CD8-positive, alpha-beta T cell (primary cell): ENCODE measurements at regions of chr15 and their contacts with region 1.

Region 1: DNA sequence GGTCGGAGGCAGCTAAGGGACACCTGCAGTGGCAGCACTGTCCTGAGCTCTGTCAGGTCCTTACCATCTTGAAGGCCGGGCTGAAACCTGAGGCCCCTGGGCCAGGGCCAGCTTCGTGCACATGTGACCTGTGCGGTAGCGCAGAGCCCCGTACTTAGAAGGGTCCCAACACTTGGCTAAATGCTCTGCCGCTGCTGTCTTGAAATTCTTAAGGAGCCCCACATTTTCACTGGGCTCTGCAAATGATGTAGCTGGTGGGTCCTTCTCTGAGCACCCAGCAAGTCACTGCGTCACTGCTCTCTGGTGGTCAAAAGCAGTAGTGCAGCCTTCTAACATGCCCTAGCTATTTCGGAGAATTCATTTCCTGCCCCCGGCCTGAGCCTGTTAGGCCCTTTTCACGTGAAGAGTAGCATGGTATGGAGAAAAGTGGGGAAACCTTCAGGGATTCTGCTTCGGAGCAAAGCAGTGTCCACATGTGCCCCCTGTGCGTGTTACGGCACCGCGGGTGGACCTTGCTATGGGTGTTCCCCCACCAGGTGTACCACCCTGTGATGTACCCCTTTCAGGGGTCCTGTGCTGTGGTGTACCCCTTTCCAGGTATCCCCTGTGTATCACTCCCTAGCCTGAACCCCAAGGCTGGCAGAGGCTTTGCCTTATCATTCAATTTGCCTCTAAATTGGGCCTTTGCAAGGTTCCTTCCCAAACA is 79.7 kb downstream of the TMEM266 start:
- DNase-seq: peak; percentile 50 to 75 (median 68)
- ATAC-seq: peak; percentile 95
- H3K4me3 ChIP-seq: no peak overlapping the region
- H3K4me3 Mint-ChIP-seq: no peak overlapping the region
- H3K27ac ChIP-seq: no peak overlapping the region
- H3K27ac Mint-ChIP-seq: no peak overlapping the region
- H3K4me1 ChIP-seq: peaks cover 5% of the 10 kb centered on the region
- H3K4me1 Mint-ChIP-seq: peaks cover 1% of the 10 kb centered on the region
- H3K27me3 ChIP-seq: no peaks in the 10 kb centered on the region
- H3K27me3 Mint-ChIP-seq: peaks cover 27% of the 10 kb centered on the region
- CTCF ChIP-seq: peak; percentile 80

Region 2: DNA sequence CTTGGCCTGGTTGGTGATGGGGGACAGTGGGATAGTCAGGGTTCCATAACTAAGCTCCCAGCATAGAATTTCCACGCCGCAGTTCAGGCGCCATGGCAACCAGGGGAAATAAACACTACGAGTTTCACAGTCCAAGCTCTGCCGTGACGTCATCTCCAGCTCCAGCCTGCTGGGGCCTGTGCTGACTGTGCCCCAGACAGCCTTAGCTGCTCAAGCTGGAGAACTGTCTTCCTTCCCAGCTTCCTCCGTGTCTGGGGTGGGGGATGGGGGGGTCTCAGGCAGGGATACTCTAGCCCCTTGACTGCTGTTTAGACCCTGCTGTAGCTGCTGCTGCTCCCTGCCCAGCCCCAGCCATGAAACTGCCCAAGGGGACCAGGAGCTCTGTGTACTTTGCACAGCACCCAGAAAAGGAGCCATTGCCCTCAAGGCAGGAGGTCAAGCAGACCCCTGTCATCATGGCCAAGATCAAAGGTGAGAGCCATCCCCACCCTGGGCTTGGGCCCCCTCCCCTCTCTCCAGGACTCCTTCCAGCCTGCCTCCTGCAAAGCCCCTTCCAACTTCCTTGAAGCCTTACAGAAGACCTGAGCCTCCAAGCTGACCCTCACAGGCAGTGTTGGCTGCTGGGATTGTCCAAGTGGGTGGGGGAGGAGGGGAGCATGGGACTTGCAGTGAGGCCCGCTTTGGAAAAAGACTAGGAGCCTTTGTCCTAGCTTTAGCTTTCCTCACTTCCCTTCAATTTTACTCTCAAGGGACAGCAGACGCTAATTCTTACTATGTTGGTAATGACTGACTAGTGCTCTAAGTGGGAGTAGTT is 415.5 kb before region 1 on chr15:
- CTCF ChIA-PET with region 1: interaction called, 10 read pairs
- POLR2A ChIA-PET with region 1: no interaction called
- intact Hi-C with region 1: loop called in 1 of 2 experiments (anchors 1 kb)
- DNase-seq: peak in 5 of 9 experiments; percentile 15 to 57 (median 23)
- ATAC-seq: no peak
- H3K4me3 ChIP-seq: no peak overlapping the region
- H3K4me3 Mint-ChIP-seq: no peak overlapping the region
- H3K27ac ChIP-seq: no peak overlapping the region
- H3K27ac Mint-ChIP-seq: no peak overlapping the region
- H3K4me1 ChIP-seq: no peaks in the 10 kb centered on the region
- H3K4me1 Mint-ChIP-seq: no peaks in the 10 kb centered on the region
- H3K27me3 ChIP-seq: no peaks in the 10 kb centered on the region
- H3K27me3 Mint-ChIP-seq: peaks cover 16% of the 10 kb centered on the region
- CTCF ChIP-seq: no peak

Region 3: GRCh38 chr15:75809986-75810750 is 329.4 kb before region 1 on chr15:
- CTCF ChIA-PET with region 1: interaction called, 17 read pairs
- POLR2A ChIA-PET with region 1: no interaction called
- intact Hi-C with region 1: no loop called
- DNase-seq: peak in 2 of 9 experiments; percentile 33 to 41
- ATAC-seq: no peak
- H3K4me3 ChIP-seq: no peak overlapping the region
- H3K4me3 Mint-ChIP-seq: no peak overlapping the region
- H3K27ac ChIP-seq: no peak overlapping the region
- H3K27ac Mint-ChIP-seq: no peak overlapping the region
- H3K4me1 ChIP-seq: no peaks in the 10 kb centered on the region
- H3K4me1 Mint-ChIP-seq: no peaks in the 10 kb centered on the region
- H3K27me3 ChIP-seq: no peaks in the 10 kb centered on the region
- H3K27me3 Mint-ChIP-seq: peaks cover 4% of the 10 kb centered on the region
- CTCF ChIP-seq: no peak

Region 4: GRCh38 chr15:76057332-76058000 is 82.1 kb before region 1 on chr15:
- CTCF ChIA-PET with region 1: interaction called, 47 read pairs
- POLR2A ChIA-PET with region 1: no interaction called
- intact Hi-C with region 1: loop called (anchors 1 kb)
- DNase-seq: peak in 5 of 9 experiments; percentile 21 to 68 (median 45)
- ATAC-seq: peak; percentile 42
- H3K4me3 ChIP-seq: no peak overlapping the region
- H3K4me3 Mint-ChIP-seq: peak overlapping the region; percentile 26
- H3K27ac ChIP-seq: no peak overlapping the region
- H3K27ac Mint-ChIP-seq: no peak overlapping the region
- H3K4me1 ChIP-seq: peaks cover 15% of the 10 kb centered on the region
- H3K4me1 Mint-ChIP-seq: peaks cover 17% of the 10 kb centered on the region
- H3K27me3 ChIP-seq: peaks cover 25 to 28% of the 10 kb centered on the region in 2 experiments
- H3K27me3 Mint-ChIP-seq: peaks cover 54% of the 10 kb centered on the region
- CTCF ChIP-seq: peak; percentile 82

Region 5: DNA sequence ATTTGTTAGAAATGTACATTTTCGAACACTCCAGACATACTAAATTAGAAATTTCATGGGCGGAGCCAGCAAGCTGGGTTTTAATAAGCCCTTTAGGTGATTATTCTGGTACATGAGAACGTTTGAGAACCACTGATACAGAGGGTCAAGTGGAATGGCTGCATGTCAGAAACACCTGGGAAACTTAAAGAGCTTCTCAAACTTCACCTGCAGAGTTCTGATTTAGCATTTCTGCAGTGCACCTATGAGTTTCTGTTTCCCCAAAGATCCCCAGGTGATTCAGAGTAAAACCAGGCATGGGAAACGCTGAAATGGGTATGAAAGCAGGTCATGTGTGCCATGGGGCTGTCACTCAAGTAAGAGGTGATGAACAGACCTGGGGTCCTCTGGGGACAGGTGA is 11.6 kb before region 1 on chr15:
- CTCF ChIA-PET with region 1: interaction called, 11 read pairs
- POLR2A ChIA-PET with region 1: no interaction called
- intact Hi-C with region 1: no loop called
- DNase-seq: no peak
- ATAC-seq: no peak
- H3K4me3 ChIP-seq: no peak overlapping the region
- H3K4me3 Mint-ChIP-seq: no peak overlapping the region
- H3K27ac ChIP-seq: no peak overlapping the region
- H3K27ac Mint-ChIP-seq: no peak overlapping the region
- H3K4me1 ChIP-seq: no peaks in the 10 kb centered on the region
- H3K4me1 Mint-ChIP-seq: no peaks in the 10 kb centered on the region
- H3K27me3 ChIP-seq: no peaks in the 10 kb centered on the region
- H3K27me3 Mint-ChIP-seq: peaks cover 23% of the 10 kb centered on the region
- CTCF ChIP-seq: no peak

Region 6: GRCh38 chr15:76150971-76151598 is 11.6 kb after region 1 on chr15:
- CTCF ChIA-PET with region 1: interaction called, 32 read pairs
- POLR2A ChIA-PET with region 1: no interaction called
- intact Hi-C with region 1: no loop called
- DNase-seq: peak; percentile 59 to 80 (median 72)
- ATAC-seq: peak; percentile 88
- H3K4me3 ChIP-seq: no peak overlapping the region
- H3K4me3 Mint-ChIP-seq: no peak overlapping the region
- H3K27ac ChIP-seq: no peak overlapping the region
- H3K27ac Mint-ChIP-seq: no peak overlapping the region
- H3K4me1 ChIP-seq: no peaks in the 10 kb centered on the region
- H3K4me1 Mint-ChIP-seq: peaks cover 13% of the 10 kb centered on the region
- H3K27me3 ChIP-seq: peaks cover 0 to 3% of the 10 kb centered on the region in 2 experiments
- H3K27me3 Mint-ChIP-seq: peaks cover 10% of the 10 kb centered on the region
- CTCF ChIP-seq: peak; percentile 81